ENCODE measurements at regions of chr7 and their contacts with region 1.

Region 1: GRCh38 chr7:148698397-148699023 is at the start of gene CUL1:
- DNase-seq: peak; percentile 89
- H3K4me3 Mint-ChIP-seq: peak within 1 kb of the TSS; percentile 86
- H3K27ac Mint-ChIP-seq: peak within 1 kb of the TSS; percentile 97
- H3K4me1 Mint-ChIP-seq: peaks cover 53% of the 10 kb centered on the region
- H3K27me3 Mint-ChIP-seq: no peaks in the 10 kb centered on the region
- total RNA-seq, gene CUL1: 59.6 to 62.2 TPM

Region 2: GRCh38 chr7:148527707-148528168 is 170.8 kb before region 1 on chr7:
- CTCF ChIA-PET with region 1: no interaction called
- intact Hi-C with region 1: no loop called
- DNase-seq: peak; percentile 98
- H3K4me3 Mint-ChIP-seq: no peak overlapping the region
- H3K27ac Mint-ChIP-seq: no peak overlapping the region
- H3K4me1 Mint-ChIP-seq: peaks cover 4% of the 10 kb centered on the region
- H3K27me3 Mint-ChIP-seq: peaks cover 33% of the 10 kb centered on the region

Region 3: DNA sequence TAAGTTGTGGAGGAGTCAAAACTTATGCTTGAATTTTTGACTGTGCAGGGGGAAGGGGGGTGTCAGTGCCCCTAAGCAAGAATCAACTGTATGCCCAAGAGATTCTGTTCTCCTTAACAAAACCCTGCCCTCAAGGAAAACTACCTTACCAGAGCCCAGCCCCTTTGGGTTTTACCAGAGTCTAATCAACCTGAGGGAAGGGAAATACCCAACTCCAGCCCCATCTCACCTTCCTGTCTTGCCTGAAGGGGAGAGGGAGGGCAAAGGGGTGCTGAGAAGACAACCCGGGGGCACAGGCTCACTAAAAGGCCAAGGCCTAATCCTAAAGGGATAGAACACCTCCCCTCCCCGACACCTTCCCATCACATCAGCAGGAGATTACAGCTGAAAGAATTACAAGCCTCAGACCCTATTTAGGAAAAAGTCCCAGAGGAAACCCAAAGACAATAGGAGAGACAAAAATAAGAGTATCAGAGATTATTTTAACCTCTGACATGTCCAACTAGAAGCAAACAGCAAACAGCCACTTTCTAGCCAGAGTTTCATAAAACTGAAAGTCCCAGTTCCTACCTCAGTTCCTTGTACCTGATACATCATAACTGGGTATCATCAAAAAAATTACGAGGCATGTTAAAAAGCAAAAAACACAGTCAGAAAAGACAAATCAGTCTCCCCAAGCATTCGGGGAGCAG is 134.8 kb before region 1 on chr7:
- CTCF ChIA-PET with region 1: no interaction called
- intact Hi-C with region 1: loop called (anchors 1 kb)
- DNase-seq: peak; percentile 53
- H3K4me3 Mint-ChIP-seq: peak overlapping the region; percentile 20
- H3K27ac Mint-ChIP-seq: peak overlapping the region; percentile 89
- H3K4me1 Mint-ChIP-seq: peaks cover 27% of the 10 kb centered on the region
- H3K27me3 Mint-ChIP-seq: peaks cover 2% of the 10 kb centered on the region

Region 4: GRCh38 chr7:148624735-148625134 is 73.8 kb before region 1 on chr7:
- CTCF ChIA-PET with region 1: interaction called, 3 read pairs
- intact Hi-C with region 1: loop called (anchors 1 kb)
- DNase-seq: no peak
- H3K4me3 Mint-ChIP-seq: no peak overlapping the region
- H3K27ac Mint-ChIP-seq: no peak overlapping the region
- H3K4me1 Mint-ChIP-seq: peaks cover 56% of the 10 kb centered on the region
- H3K27me3 Mint-ChIP-seq: peaks cover 2% of the 10 kb centered on the region

Region 5: GRCh38 chr7:148773334-148773733 is 74.8 kb after region 1 on chr7:
- CTCF ChIA-PET with region 1: no interaction called
- intact Hi-C with region 1: loop called (anchors 1 kb)
- DNase-seq: peak; percentile 54
- H3K4me3 Mint-ChIP-seq: no peak overlapping the region
- H3K27ac Mint-ChIP-seq: peak overlapping the region; percentile 71
- H3K4me1 Mint-ChIP-seq: peaks cover 29% of the 10 kb centered on the region
- H3K27me3 Mint-ChIP-seq: no peaks in the 10 kb centered on the region

Region 6: GRCh38 chr7:148940702-148941597 is 242.4 kb after region 1 on chr7:
- CTCF ChIA-PET with region 1: no interaction called
- intact Hi-C with region 1: loop called (anchors 1 kb)
- DNase-seq: peak; percentile 68
- H3K4me3 Mint-ChIP-seq: peak overlapping the region; percentile 94
- H3K27ac Mint-ChIP-seq: peak overlapping the region; percentile 98
- H3K4me1 Mint-ChIP-seq: peaks cover 15% of the 10 kb centered on the region
- H3K27me3 Mint-ChIP-seq: no peaks in the 10 kb centered on the region

Region 7: GRCh38 chr7:149005241-149006050 is 306.9 kb after region 1 on chr7:
- CTCF ChIA-PET with region 1: no interaction called
- intact Hi-C with region 1: no loop called
- DNase-seq: peak; percentile 88
- H3K4me3 Mint-ChIP-seq: no peak overlapping the region
- H3K27ac Mint-ChIP-seq: no peak overlapping the region
- H3K4me1 Mint-ChIP-seq: peaks cover 3% of the 10 kb centered on the region
- H3K27me3 Mint-ChIP-seq: no peaks in the 10 kb centered on the region

Region 8: DNA sequence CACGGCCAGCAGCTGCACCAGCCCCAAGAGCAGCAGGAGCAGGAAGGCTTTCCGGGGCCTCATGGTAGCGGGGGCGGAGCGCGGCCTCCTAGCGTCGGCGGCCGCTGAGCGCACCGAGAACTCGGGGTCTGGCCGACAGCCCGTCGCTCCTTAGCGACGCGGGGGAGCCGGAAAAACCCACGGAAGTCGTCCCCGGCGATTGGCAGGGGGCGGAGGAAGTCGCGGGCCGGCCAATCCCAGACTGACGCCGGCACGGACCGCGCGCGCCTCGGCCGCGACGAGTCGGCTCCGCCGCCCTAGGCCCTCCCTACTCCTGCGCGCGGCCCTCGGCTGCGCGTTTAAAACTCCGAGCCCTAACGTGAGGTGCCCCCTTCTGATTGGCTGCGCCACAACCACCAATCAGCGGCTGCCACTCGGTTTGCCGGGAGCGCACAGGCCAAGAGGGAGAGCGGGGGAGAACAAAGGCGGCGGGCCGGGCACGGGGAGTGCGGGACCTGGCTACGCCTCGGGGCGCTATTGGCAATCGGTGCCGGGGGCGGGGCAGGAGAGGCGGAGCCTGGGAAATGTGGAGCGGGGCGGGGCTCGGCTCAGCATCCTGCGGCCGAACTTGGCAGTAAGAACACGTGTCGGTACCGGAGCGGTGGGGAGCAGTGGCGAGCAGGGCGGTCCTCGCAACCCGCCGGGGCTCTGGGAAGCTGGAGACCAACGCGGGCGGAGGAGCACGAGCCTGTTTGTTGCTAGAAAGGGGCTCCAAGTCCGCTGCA is 330.0 kb after region 1 on chr7 and contains the start of gene PDIA4:
- CTCF ChIA-PET with region 1: no interaction called
- intact Hi-C with region 1: loop called (anchors 1 kb)
- DNase-seq: peak; percentile 100
- H3K4me3 Mint-ChIP-seq: peak within 1 kb of the TSS; percentile 95
- H3K27ac Mint-ChIP-seq: peak within 1 kb of the TSS; percentile 89
- H3K4me1 Mint-ChIP-seq: peaks cover 37% of the 10 kb centered on the region
- H3K27me3 Mint-ChIP-seq: no peaks in the 10 kb centered on the region
- total RNA-seq, gene PDIA4: 80.2 to 82.8 TPM

Region 9: DNA sequence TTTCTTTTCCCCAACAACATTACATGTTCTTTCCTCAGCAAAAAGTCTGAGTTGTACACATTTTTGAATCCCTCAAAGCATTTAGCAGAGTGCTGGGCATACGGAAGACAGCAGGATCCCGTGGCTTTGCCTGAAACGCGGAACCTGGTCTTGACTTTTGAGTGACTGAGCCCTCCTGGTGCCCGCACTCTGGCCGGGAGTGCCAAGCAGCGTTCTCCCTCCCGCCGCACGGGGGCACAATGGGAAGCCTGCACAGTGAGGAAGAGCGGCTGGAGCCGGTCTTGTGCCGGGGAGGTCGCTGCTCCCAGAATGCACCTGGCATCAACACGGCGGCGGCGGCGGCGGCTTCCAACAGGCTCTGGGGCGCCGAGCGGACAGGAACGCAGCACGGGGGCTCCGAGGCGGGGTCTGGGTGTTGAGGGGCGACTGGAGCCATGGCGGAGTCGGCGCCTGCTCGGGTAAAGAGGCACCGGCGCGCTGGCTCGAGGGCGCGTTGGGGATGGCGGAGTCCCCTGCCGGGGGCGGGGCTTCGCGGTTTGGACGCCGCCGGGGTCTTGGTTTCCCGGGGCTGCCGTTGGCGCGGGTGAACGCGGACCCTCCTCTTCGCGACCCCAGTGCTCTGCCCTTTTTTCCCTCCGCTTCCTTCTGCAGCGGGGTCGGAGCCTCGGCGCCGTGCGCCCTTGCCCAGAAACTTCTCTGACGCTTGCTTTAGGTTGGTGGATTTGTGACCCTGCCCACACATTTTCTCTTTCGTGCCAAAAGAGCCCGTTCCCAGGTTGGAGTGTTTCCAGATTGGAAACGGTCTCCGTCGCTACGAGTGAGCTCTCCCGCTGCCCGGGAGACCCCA is 541.1 kb after region 1 on chr7 and contains the start of gene ZNF212:
- CTCF ChIA-PET with region 1: no interaction called
- intact Hi-C with region 1: loop called (anchors 10 kb)
- DNase-seq: peak; percentile 93
- H3K4me3 Mint-ChIP-seq: peak within 1 kb of the TSS; percentile 89
- H3K27ac Mint-ChIP-seq: peak within 1 kb of the TSS; percentile 90
- H3K4me1 Mint-ChIP-seq: peaks cover 38% of the 10 kb centered on the region
- H3K27me3 Mint-ChIP-seq: no peaks in the 10 kb centered on the region
- total RNA-seq, gene ZNF212: 9.0 to 10.4 TPM

Measured in activated naive CD4-positive, alpha-beta T cell treated with anti-CD3 and anti-CD28 coated beads for 36 hours (primary cell).